ENCODE measurements at regions of chr1 and their contacts with region 1.

Region 1: GRCh38 chr1:194846488-194846887 is 1660.1 kb upstream of the B3GALT2 start:
- DNase-seq: no peak
- ATAC-seq: no peak
- H3K4me3 ChIP-seq: no peak overlapping the region
- H3K27ac ChIP-seq: no peak overlapping the region
- H3K4me1 ChIP-seq: no peaks in the 10 kb centered on the region
- H3K27me3 ChIP-seq: no peaks in the 10 kb centered on the region
- CTCF ChIP-seq: no peak

Region 2: GRCh38 chr1:193417945-193418744 is 1428.3 kb before region 1 on chr1:
- intact Hi-C with region 1: loop called in 1 of 2 experiments (anchors 5 kb)
- DNase-seq: no peak
- ATAC-seq: no peak
- H3K4me3 ChIP-seq: peak overlapping the region; percentile 50
- H3K27ac ChIP-seq: no peak overlapping the region
- H3K4me1 ChIP-seq: peaks cover 9% of the 10 kb centered on the region
- H3K27me3 ChIP-seq: no peaks in the 10 kb centered on the region
- CTCF ChIP-seq: no peak

Region 3: DNA sequence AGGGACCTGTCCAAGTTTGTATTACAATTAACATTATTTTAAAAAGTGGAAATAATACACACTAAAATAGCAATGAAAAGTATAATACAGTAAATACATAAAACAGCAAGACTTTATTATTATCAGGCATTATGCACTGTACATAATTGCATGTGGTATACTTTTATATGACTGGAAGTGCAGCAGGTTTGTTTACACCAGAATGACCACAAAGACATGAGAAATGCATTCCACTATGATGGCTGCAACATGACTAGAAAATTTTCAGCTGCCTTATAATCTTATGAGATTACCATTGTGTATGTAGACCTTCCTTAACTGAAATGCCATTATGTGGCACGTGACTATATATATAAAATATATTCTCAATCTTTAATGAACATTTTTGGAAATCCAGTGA is 62.2 kb after region 1 on chr1:
- intact Hi-C with region 1: no loop called
- DNase-seq: no peak
- ATAC-seq: no peak
- H3K4me3 ChIP-seq: no peak overlapping the region
- H3K27ac ChIP-seq: no peak overlapping the region
- H3K4me1 ChIP-seq: no peaks in the 10 kb centered on the region
- H3K27me3 ChIP-seq: no peaks in the 10 kb centered on the region
- CTCF ChIP-seq: no peak

Region 4: DNA sequence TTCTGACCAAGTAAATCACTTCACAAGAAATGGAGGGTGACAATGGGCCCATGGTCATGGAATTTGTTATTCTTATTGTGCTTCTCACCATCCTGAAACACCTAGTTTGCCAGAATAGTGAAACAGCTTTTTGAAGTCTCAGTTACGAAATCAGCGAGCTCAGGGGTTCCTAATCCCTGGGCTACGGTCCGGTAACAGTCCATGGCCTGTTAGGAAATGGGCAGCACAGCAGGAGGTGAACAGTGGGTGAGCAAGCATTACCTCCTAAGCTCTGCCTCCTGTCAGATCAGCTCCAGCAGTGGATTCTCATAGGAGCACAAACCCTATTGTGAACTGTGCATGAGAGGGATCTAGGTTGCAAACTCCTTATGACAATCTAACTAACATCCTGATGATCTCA is 405.4 kb after region 1 on chr1:
- intact Hi-C with region 1: no loop called
- DNase-seq: no peak
- ATAC-seq: no peak
- H3K4me3 ChIP-seq: no peak overlapping the region
- H3K27ac ChIP-seq: no peak overlapping the region
- H3K4me1 ChIP-seq: no peaks in the 10 kb centered on the region
- H3K27me3 ChIP-seq: no peaks in the 10 kb centered on the region
- CTCF ChIP-seq: no peak